ENCODE measurements at regions of chr10 and their contacts with region 1.

Region 1: GRCh38 chr10:113965683-113966082 is 78.0 kb upstream of the ADRB1 start:
- DNase-seq: no peak
- ATAC-seq: peak; percentile 34
- H3K4me3 Mint-ChIP-seq: no peak overlapping the region
- H3K27ac Mint-ChIP-seq: no peak overlapping the region
- H3K4me1 Mint-ChIP-seq: peaks cover 8% of the 10 kb centered on the region
- H3K27me3 Mint-ChIP-seq: no peaks in the 10 kb centered on the region
- CTCF ChIP-seq: no peak

Region 2: DNA sequence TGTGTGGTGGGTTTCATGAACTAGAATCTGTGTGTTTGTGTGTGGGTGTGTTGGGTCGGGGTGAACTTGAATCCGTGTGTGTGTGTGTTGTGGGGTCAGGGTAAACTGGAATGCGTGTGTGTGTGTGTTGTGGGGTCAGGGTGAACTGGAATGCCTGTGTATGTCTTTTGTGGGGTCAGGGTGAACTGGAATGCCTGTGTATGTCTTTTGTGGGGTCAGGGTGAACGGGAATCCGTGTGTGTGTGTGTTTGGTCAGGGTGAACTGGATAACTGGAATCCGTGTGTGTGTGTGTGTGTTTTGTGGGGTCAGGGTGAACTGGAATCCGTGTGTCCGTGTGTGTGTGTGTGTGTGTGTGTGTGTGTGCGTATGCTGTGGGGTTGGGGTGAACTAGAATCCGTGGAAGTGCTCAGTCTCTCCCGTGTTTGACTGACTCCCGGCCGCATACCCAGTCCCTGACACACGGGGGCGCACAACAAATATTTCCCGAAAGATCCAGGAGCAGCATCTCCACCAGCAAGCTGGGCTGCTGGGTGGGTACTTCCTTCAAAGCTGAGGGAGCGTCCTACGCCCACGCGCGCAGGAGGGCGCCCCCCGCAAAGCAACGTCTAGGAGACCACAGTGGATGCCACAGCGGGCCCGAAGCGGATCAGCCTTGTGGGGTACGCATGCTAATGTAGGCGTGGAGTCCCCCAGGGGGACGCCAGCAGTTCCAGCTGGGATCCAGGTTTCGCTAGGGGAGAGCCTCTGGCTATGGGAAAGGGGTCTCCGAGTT is 286.8 kb before region 1 on chr10:
- CTCF ChIA-PET with region 1: no interaction called
- POLR2A ChIA-PET with region 1: no interaction called
- intact Hi-C with region 1: no loop called
- DNase-seq: peak; percentile 68
- ATAC-seq: peak; percentile 9
- H3K4me3 Mint-ChIP-seq: peak overlapping the region; percentile 92
- H3K27ac Mint-ChIP-seq: peak overlapping the region; percentile 94
- H3K4me1 Mint-ChIP-seq: peaks cover 48% of the 10 kb centered on the region
- H3K27me3 Mint-ChIP-seq: no peaks in the 10 kb centered on the region
- CTCF ChIP-seq: no peak

Region 3: GRCh38 chr10:113947184-113948041 is 18.3 kb before region 1 on chr10:
- CTCF ChIA-PET with region 1: no interaction called
- POLR2A ChIA-PET with region 1: no interaction called
- intact Hi-C with region 1: loop called (anchors 1 kb)
- DNase-seq: no peak
- ATAC-seq: no peak
- H3K4me3 Mint-ChIP-seq: no peak overlapping the region
- H3K27ac Mint-ChIP-seq: no peak overlapping the region
- H3K4me1 Mint-ChIP-seq: no peaks in the 10 kb centered on the region
- H3K27me3 Mint-ChIP-seq: no peaks in the 10 kb centered on the region
- CTCF ChIP-seq: no peak